Transverse colon (tissue), 4 donors: ENCODE measurements at regions of chr15 and their contacts with region 1.

Region 1: GRCh38 chr15:95654271-95654670 is 676.2 kb upstream of the NR2F2 start:
- DNase-seq: no peak
- H3K4me3 ChIP-seq: no peak overlapping the region
- H3K27ac ChIP-seq: peak overlapping the region in 2 of 4 donors; percentile 13 to 25
- H3K4me1 ChIP-seq: no peaks in the 10 kb centered on the region
- H3K27me3 ChIP-seq: no peaks in the 10 kb centered on the region
- CTCF ChIP-seq: no peak
- EP300 ChIP-seq: no peak
- POLR2A ChIP-seq: no peak

Region 2: DNA sequence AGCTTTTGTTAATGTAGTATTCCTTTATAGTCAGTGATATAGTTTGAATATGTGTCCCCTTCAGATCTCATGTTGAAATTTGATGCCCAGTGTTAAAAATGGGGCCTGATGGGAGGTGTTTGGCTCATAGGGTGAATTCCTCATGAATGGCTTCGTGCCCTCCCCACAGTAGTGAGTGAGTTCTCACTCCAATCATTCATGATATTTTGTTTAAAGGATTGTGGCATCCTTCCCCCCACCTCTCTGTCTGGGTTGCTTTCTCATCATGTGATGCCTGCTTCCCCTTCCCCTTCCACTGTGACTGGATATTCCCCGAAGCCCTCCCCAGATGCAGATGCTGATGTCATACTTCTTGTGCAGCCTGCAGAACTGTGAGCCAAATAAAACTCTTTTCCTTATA is 26.5 kb after region 1 on chr15:
- in situ Hi-C with region 1: no loop called
- intact Hi-C with region 1: loop called (anchors 1 kb)
- DNase-seq: no peak
- H3K4me3 ChIP-seq: no peak overlapping the region
- H3K27ac ChIP-seq: no peak overlapping the region
- H3K4me1 ChIP-seq: no peaks in the 10 kb centered on the region
- H3K27me3 ChIP-seq: no peaks in the 10 kb centered on the region
- CTCF ChIP-seq: no peak
- EP300 ChIP-seq: no peak
- POLR2A ChIP-seq: no peak

Region 3: GRCh38 chr15:95698951-95699350 is 44.7 kb after region 1 on chr15:
- in situ Hi-C with region 1: no loop called
- intact Hi-C with region 1: no loop called
- DNase-seq: no peak
- H3K4me3 ChIP-seq: no peak overlapping the region
- H3K27ac ChIP-seq: no peak overlapping the region
- H3K4me1 ChIP-seq: no peaks in the 10 kb centered on the region
- H3K27me3 ChIP-seq: no peaks in the 10 kb centered on the region
- CTCF ChIP-seq: no peak
- EP300 ChIP-seq: no peak
- POLR2A ChIP-seq: no peak